HEK293 (cell line): ENCODE measurements at regions of chr1 and their contacts with region 1.

Region 1: DNA sequence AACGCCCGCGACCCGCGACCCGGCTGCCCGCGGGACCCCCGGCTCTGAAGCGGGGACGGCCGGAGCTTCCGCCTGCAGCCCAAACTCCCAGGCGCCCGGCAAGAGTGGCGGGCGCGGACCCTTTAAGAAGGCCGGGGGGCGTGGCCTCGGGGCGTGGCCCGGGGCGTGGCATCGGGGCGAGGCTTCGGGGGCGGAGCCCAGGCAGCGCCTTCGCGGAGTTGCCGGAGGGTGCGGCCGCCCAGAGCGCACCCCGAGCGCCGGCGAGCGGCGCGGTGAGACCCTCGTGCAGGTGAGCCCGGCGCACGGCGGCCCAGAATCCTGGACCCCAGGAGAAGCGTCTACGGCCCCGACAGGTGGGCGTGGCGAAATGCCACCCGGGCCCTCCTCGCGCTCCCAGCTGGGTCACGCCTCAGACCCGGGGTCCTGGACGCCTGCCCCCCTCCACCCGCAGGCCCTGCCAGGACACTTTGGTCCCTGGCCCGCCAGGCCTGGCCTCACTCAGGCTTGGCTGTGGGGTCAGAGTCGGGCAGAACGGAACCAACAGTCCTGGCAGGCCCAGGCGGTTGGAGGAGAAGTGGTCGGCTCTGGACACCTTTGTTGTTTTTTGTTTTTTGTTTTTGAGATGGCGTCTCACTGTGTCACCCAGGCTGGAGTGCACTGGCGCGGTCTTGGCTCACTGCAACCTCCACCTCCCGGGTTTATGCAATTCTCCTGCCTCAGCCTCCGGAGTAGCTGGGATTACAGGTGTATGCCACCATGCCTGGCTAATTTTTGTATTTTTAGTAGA is 14.4 kb downstream of the RNF223 start:
- H3K4me3 ChIP-seq: peak overlapping the region; percentile 45
- H3K27ac ChIP-seq: no peak overlapping the region; the same call in 1 of the 2 replicates
- H3K4me1 ChIP-seq: 0 out of 2 replicates have a peak, but pooled peaks cover 5% of the 10 kb centered on the region
- CTCF ChIP-seq: no peak

Region 2: DNA sequence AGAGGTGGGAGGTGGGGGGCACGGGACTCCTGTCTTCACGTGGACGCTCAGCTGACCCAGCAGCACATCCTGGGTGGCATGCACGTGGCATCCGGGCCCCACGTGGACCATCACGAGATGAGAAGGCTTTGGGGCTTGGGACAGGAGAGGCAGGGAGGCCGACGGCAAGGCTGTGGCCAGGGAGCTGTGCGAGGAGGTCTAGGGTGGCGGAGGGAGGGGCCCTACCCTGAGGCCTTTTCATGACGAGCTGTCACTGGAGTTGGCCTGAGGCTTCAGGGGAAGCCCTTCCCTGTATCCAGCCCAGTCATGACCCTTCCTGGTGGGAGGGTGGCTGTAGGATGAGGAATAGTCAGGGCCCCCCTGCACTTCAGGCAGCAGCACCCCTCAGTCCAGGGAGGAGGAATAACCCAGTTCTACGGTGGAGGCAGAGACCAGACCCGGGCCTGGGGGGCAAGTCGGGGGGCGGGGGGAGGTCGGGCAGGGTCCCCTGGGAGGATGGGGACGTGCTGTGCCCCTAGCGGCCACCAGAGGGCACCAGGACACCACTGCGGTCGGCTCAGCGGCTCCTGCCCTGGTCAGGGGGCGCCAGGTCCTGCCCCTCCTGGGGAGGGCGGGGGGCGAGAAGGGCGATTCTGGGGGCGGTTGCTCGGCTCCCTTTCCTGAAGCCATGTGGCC is 75.8 kb before region 1 on chr1:
- CTCF ChIA-PET with region 1: interaction called, 53 read pairs
- POLR2A ChIA-PET with region 1: no interaction called
- H3K4me3 ChIP-seq: no peak overlapping the region
- H3K27ac ChIP-seq: no peak overlapping the region
- H3K4me1 ChIP-seq: no peaks in the 10 kb centered on the region
- CTCF ChIP-seq: peak; percentile 54

Region 3: DNA sequence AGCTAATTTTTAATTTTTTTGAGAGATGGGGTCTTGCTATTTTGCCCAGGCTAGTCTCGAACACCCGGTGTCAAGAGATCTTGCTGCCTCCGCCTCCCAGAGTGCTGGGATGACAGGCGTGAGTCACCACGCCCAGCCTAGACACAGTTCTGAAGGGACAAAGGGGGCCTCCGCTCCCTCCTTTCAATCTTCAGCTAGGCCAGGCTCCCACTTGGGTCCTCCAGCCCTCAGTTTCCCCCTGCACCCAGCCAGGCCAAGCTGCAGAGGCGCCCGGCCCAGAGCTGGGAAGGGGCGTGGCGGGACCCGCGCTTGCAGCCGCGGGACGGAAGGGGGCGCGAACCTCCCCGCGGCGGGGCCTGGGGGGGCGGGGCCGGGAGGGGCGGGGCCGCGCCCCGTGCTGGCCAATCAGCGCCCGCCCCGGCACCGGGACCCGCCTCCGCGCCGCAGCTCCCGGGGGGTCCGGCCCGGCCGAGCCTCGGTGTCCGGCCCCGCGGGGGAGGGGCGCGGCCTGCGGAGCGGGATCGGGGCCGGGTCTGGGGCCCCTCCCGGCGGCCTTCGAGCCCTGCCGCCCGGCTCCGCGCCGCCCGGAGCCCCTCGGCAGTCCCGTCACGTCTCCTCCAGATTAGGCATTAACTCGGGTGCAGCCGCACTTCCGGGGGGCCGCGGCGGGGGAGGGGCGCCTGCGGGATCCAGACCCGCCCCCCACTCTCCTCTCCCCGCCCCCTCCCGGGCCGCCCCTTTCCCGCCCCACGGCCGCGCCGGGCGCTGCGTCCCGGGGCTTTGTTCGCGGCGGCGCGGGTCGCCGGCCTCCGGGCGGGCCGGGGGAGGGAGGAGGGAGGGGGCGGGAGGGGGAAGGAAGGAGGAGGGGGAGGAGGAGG is 40.3 kb before region 1 on chr1:
- CTCF ChIA-PET with region 1: interaction called, 13 read pairs
- POLR2A ChIA-PET with region 1: interaction called, 3 read pairs
- H3K4me3 ChIP-seq: peak overlapping the region; percentile 45
- H3K27ac ChIP-seq: peak overlapping the region; percentile 64; the same call in 1 of the 2 replicates
- H3K4me1 ChIP-seq: peaks cover 3% of the 10 kb centered on the region; the same call in 1 of the 2 replicates
- CTCF ChIP-seq: peak; percentile 68